Keratinocyte (primary cell): ENCODE measurements at regions of chr2 and their contacts with region 1.

Region 1: DNA sequence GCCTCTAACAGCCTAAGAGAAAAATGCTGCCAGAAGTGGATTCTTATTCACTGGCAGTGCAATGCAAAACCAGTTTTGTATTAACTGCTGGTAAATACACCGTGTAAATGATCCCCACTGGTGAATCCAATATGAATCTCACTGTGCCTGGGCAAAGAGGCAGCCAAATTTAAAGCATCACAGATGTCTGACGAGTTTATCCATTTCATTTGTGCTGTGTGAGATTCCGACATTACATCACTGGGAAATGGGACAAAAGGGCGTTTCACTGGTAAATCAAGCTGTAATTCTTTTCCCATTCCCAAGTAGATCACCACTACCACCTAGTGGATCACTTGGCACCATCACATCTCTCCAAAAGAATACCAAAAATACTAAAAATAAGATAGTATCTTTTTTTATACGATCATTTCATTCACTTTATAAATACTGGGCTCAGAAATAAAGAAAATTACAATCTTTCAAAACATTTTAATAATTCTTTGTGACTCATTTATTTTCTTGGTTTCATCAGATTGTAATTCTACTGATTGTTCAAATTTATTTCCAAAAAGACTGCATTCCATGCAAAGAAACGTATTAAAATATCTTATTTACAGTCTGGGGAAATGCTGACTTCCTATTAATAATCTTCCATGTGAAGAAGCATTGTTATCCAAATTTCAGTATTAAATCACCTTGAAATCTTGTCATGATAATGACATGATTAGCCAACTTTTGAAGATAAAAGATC is 125.6 kb downstream of the GRB14 start:
- DNase-seq: no peak
- H3K4me3 ChIP-seq: no peak overlapping the region
- H3K27ac ChIP-seq: no peak overlapping the region
- H3K4me1 ChIP-seq: no peaks in the 10 kb centered on the region
- H3K27me3 ChIP-seq: no peaks in the 10 kb centered on the region
- CTCF ChIP-seq: peak; percentile 40 to 64 (median 47)

Region 2: DNA sequence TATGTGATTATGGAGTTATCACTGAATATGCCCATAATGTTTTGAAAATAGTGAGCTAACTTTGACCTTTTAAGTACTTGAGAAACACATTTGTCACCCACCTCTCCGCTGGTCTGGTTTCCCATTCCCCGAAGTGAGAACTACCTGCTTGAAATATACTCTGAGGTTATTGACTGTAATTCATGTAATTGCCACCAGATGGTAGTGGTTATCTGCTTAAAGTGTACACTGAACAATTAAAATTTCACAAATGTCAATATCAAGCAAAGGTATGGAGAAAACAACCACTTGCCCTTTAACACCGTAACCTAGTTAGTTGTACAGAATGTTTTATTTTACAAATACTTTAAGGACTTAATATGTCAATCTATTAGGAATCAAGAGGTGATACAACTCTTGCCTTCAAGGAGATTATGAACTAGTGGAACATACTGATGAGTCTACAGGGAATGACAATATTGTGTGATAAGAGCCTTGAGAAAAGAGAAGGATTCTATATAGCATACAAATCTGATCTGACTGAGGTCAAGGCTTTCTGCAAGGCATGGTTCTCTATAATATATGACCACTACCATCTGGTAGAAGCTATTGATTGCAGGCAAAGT is 1340.3 kb before region 1 on chr2:
- dilution Hi-C with region 1: loop called (anchors 25 kb)
- DNase-seq: no peak
- H3K4me3 ChIP-seq: no peak overlapping the region
- H3K27ac ChIP-seq: no peak overlapping the region
- H3K4me1 ChIP-seq: no peaks in the 10 kb centered on the region
- H3K27me3 ChIP-seq: no peaks in the 10 kb centered on the region
- CTCF ChIP-seq: peak; percentile 30 to 63 (median 34)

Region 3: GRCh38 chr2:164412831-164413230 is 82.8 kb before region 1 on chr2:
- dilution Hi-C with region 1: no loop called
- DNase-seq: no peak
- H3K4me3 ChIP-seq: no peak overlapping the region
- H3K27ac ChIP-seq: no peak overlapping the region
- H3K4me1 ChIP-seq: no peaks in the 10 kb centered on the region
- H3K27me3 ChIP-seq: no peaks in the 10 kb centered on the region
- CTCF ChIP-seq: no peak